Vagina (tissue), 2 donors: ENCODE measurements at regions of chr4 and their contacts with region 1.

Region 1: GRCh38 chr4:101693842-101694398 is 96.6 kb upstream of the BANK1 start:
- DNase-seq: no peak
- H3K4me3 ChIP-seq: no peak overlapping the region
- H3K27ac ChIP-seq: no peak overlapping the region
- H3K4me1 ChIP-seq: peaks cover 5% of the 10 kb centered on the region
- H3K27me3 ChIP-seq: no peaks in the 10 kb centered on the region
- CTCF ChIP-seq: no peak
- POLR2A ChIP-seq: no peak

Region 2: GRCh38 chr4:101596781-101597552 is 97.0 kb before region 1 on chr4:
- intact Hi-C with region 1: no loop called
- DNase-seq: no peak
- H3K4me3 ChIP-seq: no peak overlapping the region
- H3K27ac ChIP-seq: no peak overlapping the region
- H3K4me1 ChIP-seq: no peaks in the 10 kb centered on the region
- H3K27me3 ChIP-seq: no peaks in the 10 kb centered on the region
- CTCF ChIP-seq: no peak
- POLR2A ChIP-seq: no peak

Region 3: DNA sequence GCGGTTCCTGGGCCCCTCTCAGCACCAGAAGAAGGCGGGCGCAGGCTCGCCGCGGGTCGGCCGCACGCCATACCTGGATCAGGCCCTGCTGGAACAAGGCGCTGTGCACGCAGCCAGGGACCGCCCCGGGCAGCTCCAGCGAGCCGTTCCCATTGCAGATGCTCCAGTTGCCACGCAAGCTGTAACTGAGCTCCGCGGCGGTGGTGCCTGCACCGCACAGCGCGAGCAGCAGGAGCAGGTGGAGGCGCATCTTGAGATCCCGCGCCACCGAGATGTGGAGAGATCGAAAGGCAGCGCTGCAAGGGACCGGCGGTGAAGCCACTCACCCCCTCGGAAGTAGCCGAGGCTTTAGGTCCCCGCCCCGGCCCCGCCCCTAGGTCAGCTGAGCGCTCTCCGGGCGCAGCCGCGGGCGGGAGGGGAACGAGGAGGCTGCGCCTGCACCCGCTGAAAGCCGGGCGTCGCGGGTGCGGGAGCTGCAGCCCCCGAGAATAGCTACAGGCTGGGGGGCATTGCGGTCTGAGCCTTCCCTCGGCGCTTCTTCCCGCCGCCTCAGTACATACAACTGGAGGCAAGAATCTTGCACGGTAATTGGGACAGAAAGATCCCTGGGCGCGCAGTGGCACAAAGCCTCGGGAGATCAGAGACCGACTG is 1066.8 kb after region 1 on chr4 and contains the start of gene MANBA:
- intact Hi-C with region 1: loop called (anchors 10 kb)
- DNase-seq: no peak
- H3K4me3 ChIP-seq: peak within 1 kb of the TSS; percentile 83 to 91
- H3K27ac ChIP-seq: peak within 1 kb of the TSS; percentile 85
- H3K4me1 ChIP-seq: peaks cover 22% of the 10 kb centered on the region
- H3K27me3 ChIP-seq: no peaks in the 10 kb centered on the region
- CTCF ChIP-seq: no peak
- POLR2A ChIP-seq: peak in 1 of 2 donors; percentile 63
- total RNA-seq, gene MANBA: 35.8 TPM